ENCODE measurements at regions of chr17 and their contacts with region 1.

Region 1: GRCh38 chr17:68759343-68760132 is 158.4 kb upstream of the FAM20A start:
- DNase-seq: peak; percentile 91
- ATAC-seq: peak; percentile 95
- H3K4me3 ChIP-seq: peak overlapping the region; percentile 42 to 53
- H3K27ac ChIP-seq: peak overlapping the region; percentile 64
- H3K4me1 ChIP-seq: peaks cover 8 to 15% of the 10 kb centered on the region in 2 experiments; a peak in 3 of 4 replicates
- H3K27me3 ChIP-seq: no peaks in the 10 kb centered on the region
- CTCF ChIP-seq: peak; percentile 94 to 99 (median 99)
- POLR2A ChIP-seq: no peak
- RAD21 ChIP-seq: peak; percentile 98

Region 2: GRCh38 chr17:67717624-67718329 is 1041.8 kb before region 1 on chr17 and contains the start of gene NOL11:
- CTCF ChIA-PET with region 1: no interaction called
- POLR2A ChIA-PET with region 1: no interaction called
- RAD21 ChIA-PET with region 1: no interaction called
- intact Hi-C with region 1: loop called (anchors 5 kb)
- DNase-seq: peak; percentile 99
- ATAC-seq: peak; percentile 98
- H3K4me3 ChIP-seq: peak within 1 kb of the TSS; percentile 83 to 94
- H3K27ac ChIP-seq: peak within 1 kb of the TSS; percentile 77
- H3K4me1 ChIP-seq: peaks cover 7 to 16% of the 10 kb centered on the region in 2 experiments; a peak in 3 of 4 replicates
- H3K27me3 ChIP-seq: no peaks in the 10 kb centered on the region
- CTCF ChIP-seq: peak; percentile 92 to 99 (median 96)
- POLR2A ChIP-seq: peak; percentile 95
- RAD21 ChIP-seq: peak; percentile 83
- total RNA-seq, gene NOL11: 118 TPM

Region 3: GRCh38 chr17:67959288-67959900 is 800.1 kb before region 1 on chr17:
- CTCF ChIA-PET with region 1: no interaction called
- POLR2A ChIA-PET with region 1: no interaction called
- RAD21 ChIA-PET with region 1: no interaction called
- intact Hi-C with region 1: loop called (anchors 10 kb)
- DNase-seq: no peak
- ATAC-seq: peak; percentile 39; the same call in 1 of the 2 replicates
- H3K4me3 ChIP-seq: no peak overlapping the region
- H3K27ac ChIP-seq: no peak overlapping the region
- H3K4me1 ChIP-seq: peaks cover 0 to 4% of the 10 kb centered on the region in 2 experiments; a peak in 1 of 4 replicates
- H3K27me3 ChIP-seq: no peaks in the 10 kb centered on the region
- CTCF ChIP-seq: peak in 1 of 3 experiments; percentile 14; a peak in 1 of 6 replicates
- POLR2A ChIP-seq: no peak
- RAD21 ChIP-seq: 0 out of 2 replicates have a peak, but pooled peaks have one; percentile 9

Region 4: DNA sequence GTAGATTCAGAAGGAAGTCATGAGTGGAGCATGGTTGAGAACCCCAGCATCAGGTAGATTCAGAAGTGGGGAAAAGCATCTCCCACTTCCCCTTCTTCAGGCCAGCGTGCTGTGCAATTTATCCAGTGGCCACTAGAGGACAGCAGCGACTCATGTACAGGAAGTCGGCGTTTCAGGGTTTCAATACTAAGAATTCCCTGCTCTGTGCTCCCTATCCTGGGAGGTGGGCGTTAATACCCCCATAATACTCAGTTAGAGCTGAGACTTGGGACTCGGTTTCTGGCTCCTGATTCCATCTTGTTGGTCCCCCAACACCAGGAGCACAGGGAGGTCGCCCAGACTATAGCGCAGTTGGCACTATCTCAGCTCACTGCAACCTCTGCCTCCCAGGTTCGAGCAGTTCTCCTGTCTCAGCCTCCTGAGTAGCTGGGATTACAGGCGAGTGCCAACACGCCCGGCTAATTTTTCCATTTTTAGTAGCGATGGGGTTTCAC is 587.0 kb before region 1 on chr17:
- CTCF ChIA-PET with region 1: no interaction called
- POLR2A ChIA-PET with region 1: no interaction called
- RAD21 ChIA-PET with region 1: no interaction called
- intact Hi-C with region 1: loop called (anchors 2 kb)
- DNase-seq: peak; percentile 63
- ATAC-seq: peak; percentile 88
- H3K4me3 ChIP-seq: no peak overlapping the region
- H3K27ac ChIP-seq: no peak overlapping the region
- H3K4me1 ChIP-seq: peaks cover 0 to 12% of the 10 kb centered on the region in 2 experiments; a peak in 3 of 4 replicates
- H3K27me3 ChIP-seq: no peaks in the 10 kb centered on the region
- CTCF ChIP-seq: peak; percentile 97 to 100 (median 99)
- POLR2A ChIP-seq: no peak
- RAD21 ChIP-seq: peak; percentile 100

Region 5: DNA sequence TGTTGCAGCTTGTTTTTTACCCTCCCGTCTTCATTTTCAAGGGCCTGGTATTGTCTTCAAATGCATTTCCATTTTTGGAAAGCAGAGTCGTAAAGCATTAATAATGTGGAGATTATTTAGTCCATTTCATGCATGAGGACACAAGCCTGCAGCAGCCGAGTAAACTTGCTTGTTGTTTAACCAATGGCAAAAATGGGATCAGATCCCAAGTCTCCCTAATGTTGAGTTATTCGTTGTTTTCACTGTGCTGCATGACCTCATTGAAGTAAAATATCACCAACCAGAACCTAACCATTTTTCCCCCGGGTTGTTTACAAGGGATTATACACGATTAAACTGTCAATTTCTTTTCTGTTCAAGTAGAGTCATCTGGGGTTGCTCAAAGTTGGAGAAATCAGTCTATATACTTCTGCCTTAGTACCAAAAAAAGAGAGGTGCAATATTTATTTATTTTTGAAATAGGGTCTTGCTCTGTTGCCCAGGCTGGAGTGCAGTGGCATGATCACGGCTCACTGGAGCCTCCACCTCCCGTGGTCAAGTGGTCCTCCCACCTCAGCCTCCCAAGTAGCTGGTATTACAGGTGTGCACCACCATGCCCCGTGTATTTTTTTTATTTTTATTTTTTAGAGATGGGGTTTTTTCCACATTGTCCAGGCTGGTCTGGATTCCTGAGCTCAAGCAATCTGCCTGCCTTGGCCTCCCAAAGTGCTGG is 499.3 kb before region 1 on chr17:
- CTCF ChIA-PET with region 1: no interaction called
- POLR2A ChIA-PET with region 1: no interaction called
- RAD21 ChIA-PET with region 1: no interaction called
- intact Hi-C with region 1: loop called (anchors 5 kb)
- DNase-seq: no peak
- ATAC-seq: no peak
- H3K4me3 ChIP-seq: peak overlapping the region in 1 of 2 experiments; percentile 38; a peak in 1 of 4 replicates
- H3K27ac ChIP-seq: no peak overlapping the region
- H3K4me1 ChIP-seq: peaks cover 5 to 35% of the 10 kb centered on the region in 2 experiments; a peak in 3 of 4 replicates
- H3K27me3 ChIP-seq: no peaks in the 10 kb centered on the region
- CTCF ChIP-seq: no peak
- POLR2A ChIP-seq: no peak
- RAD21 ChIP-seq: no peak

Region 6: GRCh38 chr17:68318103-68318991 is 441.2 kb before region 1 on chr17:
- CTCF ChIA-PET with region 1: no interaction called
- POLR2A ChIA-PET with region 1: no interaction called
- RAD21 ChIA-PET with region 1: no interaction called
- intact Hi-C with region 1: no loop called
- DNase-seq: peak; percentile 78
- ATAC-seq: peak; percentile 83
- H3K4me3 ChIP-seq: 0 out of 4 replicates have a peak overlapping the region, but pooled peaks of 1 of the 2 experiments have one; percentile 0
- H3K27ac ChIP-seq: peak overlapping the region; percentile 31
- H3K4me1 ChIP-seq: peaks cover 29 to 44% of the 10 kb centered on the region in 2 experiments
- H3K27me3 ChIP-seq: no peaks in the 10 kb centered on the region
- CTCF ChIP-seq: no peak
- POLR2A ChIP-seq: no peak
- RAD21 ChIP-seq: no peak

Region 7: DNA sequence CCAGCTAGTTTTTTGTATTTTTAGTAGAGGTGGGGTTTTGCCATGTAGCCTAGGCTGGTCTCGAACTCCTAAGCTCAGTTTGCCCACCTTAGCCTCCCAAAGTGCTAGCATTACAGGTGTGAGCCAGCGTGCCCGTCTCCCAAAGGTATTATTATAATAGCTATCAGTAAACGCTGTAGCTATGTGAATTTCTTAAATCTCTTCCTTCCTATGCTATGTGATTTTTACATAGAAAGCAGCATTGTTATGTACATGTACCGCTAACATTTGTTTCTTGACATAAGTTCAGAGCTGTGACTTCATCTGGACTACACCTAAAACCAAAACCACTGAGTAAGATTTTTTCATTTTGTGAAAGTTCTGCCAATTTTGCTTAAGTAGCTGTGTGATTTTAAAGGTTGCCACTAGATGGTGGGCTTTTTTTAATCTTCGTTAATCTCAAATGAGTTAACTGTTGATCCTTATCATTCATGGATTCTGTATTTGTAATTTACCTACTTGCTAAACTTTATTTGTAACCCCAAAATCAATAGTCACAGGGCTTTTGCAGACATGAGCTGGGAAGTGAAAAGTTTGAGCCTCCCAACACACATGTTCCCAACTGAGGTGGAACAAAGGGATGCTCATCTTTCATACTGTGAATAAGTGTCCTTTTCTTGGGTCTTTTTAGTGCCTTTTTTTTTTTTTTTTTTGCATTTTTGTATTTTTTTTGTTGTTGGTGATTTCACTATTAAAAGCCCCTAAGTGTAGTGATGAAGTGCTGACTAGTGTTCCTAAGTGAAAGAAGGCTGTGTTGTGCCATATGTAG is 225.4 kb before region 1 on chr17:
- CTCF ChIA-PET with region 1: interaction called, 10 read pairs
- POLR2A ChIA-PET with region 1: no interaction called
- RAD21 ChIA-PET with region 1: no interaction called
- intact Hi-C with region 1: loop called (anchors 1 kb)
- DNase-seq: no peak
- ATAC-seq: no peak
- H3K4me3 ChIP-seq: no peak overlapping the region
- H3K27ac ChIP-seq: no peak overlapping the region
- H3K4me1 ChIP-seq: no peaks in the 10 kb centered on the region
- H3K27me3 ChIP-seq: no peaks in the 10 kb centered on the region
- CTCF ChIP-seq: peak; percentile 17 to 66 (median 42); a peak in 4 of 6 replicates
- POLR2A ChIP-seq: no peak
- RAD21 ChIP-seq: peak; percentile 37; the same call in 1 of the 2 replicates

Region 8: DNA sequence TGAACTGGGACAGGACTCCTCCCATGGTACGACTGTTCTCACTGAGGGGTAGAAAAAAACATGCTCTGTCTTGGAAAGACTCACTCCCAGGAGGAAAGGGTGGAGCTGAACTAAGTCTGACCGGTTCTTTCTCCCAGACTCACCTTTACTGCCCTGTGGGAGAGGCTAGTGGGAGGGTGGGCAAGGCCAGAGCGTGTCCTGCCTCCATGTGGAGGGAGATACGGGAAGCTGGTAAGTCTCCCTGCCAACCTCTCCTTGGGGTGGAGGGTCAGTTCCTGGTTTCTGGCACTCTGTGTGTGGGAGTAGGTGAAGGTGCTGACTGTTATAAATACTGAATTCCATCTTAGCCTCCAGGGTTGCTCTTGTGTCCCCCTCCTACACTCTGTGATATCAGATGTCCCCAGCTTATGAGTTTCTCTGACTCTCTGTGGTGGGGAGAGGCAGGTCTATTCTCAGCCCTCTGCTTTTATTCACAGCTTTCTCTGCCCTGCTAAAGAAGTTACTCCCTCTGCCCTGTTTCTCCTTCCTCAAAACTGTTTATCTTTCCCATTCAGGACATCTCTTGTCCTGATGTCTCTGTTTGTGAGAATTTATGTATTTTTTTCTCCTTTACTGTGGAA is 131.5 kb before region 1 on chr17:
- CTCF ChIA-PET with region 1: no interaction called
- POLR2A ChIA-PET with region 1: no interaction called
- RAD21 ChIA-PET with region 1: no interaction called
- intact Hi-C with region 1: no loop called
- DNase-seq: no peak
- ATAC-seq: peak; percentile 63; the same call in 1 of the 2 replicates
- H3K4me3 ChIP-seq: no peak overlapping the region
- H3K27ac ChIP-seq: no peak overlapping the region
- H3K4me1 ChIP-seq: no peaks in the 10 kb centered on the region
- H3K27me3 ChIP-seq: no peaks in the 10 kb centered on the region
- CTCF ChIP-seq: no peak
- POLR2A ChIP-seq: no peak
- RAD21 ChIP-seq: no peak

Measured in HCT116 (cell line).